CD4-positive, alpha-beta memory T cell (primary cell): ENCODE measurements at regions of chr6 and their contacts with region 1.

Region 1: GRCh38 chr6:122730775-122731386 is 48.6 kb upstream of the FABP7 start:
- DNase-seq: peak in 2 of 5 donors; percentile 12 to 15
- H3K4me3 ChIP-seq: no peak overlapping the region
- H3K4me3 Mint-ChIP-seq: no peak overlapping the region
- H3K27ac ChIP-seq: no peak overlapping the region
- H3K27ac Mint-ChIP-seq: no peak overlapping the region
- H3K4me1 ChIP-seq: no peaks in the 10 kb centered on the region
- H3K4me1 Mint-ChIP-seq: no peaks in the 10 kb centered on the region
- H3K27me3 ChIP-seq: no peaks in the 10 kb centered on the region
- H3K27me3 Mint-ChIP-seq: peaks cover 0 to 3% of the 10 kb centered on the region in 2 donors

Region 2: GRCh38 chr6:122839477-122839876 is 108.6 kb after region 1 on chr6:
- CTCF ChIA-PET with region 1: interaction called, 17 read pairs
- POLR2A ChIA-PET with region 1: no interaction called
- intact Hi-C with region 1: loop called (anchors 1 kb)
- DNase-seq: peak; percentile 9 to 39 (median 29)
- H3K4me3 ChIP-seq: no peak overlapping the region
- H3K4me3 Mint-ChIP-seq: no peak overlapping the region
- H3K27ac ChIP-seq: no peak overlapping the region
- H3K27ac Mint-ChIP-seq: no peak overlapping the region
- H3K4me1 ChIP-seq: no peaks in the 10 kb centered on the region
- H3K4me1 Mint-ChIP-seq: no peaks in the 10 kb centered on the region
- H3K27me3 ChIP-seq: no peaks in the 10 kb centered on the region
- H3K27me3 Mint-ChIP-seq: peaks cover 5% of the 10 kb centered on the region in 2 donors